HCT116 (cell line): ENCODE measurements at regions of chr19 and their contacts with region 1.

Region 1: DNA sequence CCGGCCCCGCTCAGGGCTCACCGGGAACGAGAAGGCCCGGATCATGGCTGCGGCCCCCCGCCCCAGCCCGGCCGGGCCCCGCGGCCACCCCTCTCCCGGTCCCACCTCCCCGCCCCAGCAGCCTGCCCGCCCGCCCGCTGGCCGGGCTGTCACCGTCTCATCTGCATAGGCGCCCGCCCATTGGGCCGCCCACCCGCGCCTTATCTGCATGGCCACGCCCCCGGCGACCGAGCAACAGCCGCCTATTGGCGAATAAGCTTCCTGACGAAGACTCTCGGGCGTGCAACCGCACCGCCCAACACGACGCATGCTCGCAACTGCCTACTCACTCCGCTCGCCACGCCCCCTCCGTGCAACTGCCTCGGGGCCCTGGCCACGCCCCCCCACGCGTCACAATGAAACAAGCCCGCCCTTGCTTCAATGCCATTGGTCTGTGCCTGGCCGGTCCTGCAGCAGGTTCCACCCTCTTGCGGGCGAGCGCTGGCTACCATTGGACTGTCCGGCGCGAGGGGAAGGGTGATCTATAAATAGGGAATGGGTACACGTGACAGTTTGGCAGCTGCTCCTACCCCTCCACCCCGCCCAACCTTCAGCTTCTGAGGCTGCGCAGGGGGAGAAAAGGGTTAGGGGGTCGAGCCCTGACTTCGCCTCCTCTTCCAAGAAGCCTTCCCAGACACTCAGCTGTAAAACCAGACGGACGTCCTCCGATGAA is at the start of gene DACT3:
- DNase-seq: peak; percentile 99
- ATAC-seq: peak; percentile 93
- H3K4me3 ChIP-seq: peak within 1 kb of the TSS; percentile 39 to 59
- H3K27ac ChIP-seq: no peak within 1 kb of the TSS; the same call in 1 of the 2 replicates
- H3K4me1 ChIP-seq: peaks cover 14 to 29% of the 10 kb centered on the region in 2 experiments
- H3K27me3 ChIP-seq: no peaks in the 10 kb centered on the region
- CTCF ChIP-seq: no peak
- POLR2A ChIP-seq: no peak
- RAD21 ChIP-seq: no peak
- total RNA-seq, gene DACT3: 2.0 TPM

Region 2: GRCh38 chr19:46351241-46352041 is 309.7 kb before region 1 on chr19:
- CTCF ChIA-PET with region 1: no interaction called
- POLR2A ChIA-PET with region 1: no interaction called
- RAD21 ChIA-PET with region 1: no interaction called
- intact Hi-C with region 1: no loop called
- DNase-seq: no peak
- ATAC-seq: no peak
- H3K4me3 ChIP-seq: no peak overlapping the region
- H3K27ac ChIP-seq: peak overlapping the region; percentile 25; the same call in 1 of the 2 replicates
- H3K4me1 ChIP-seq: peaks cover 0 to 38% of the 10 kb centered on the region in 2 experiments; a peak in 2 of 4 replicates
- H3K27me3 ChIP-seq: no peaks in the 10 kb centered on the region
- CTCF ChIP-seq: no peak
- POLR2A ChIP-seq: no peak
- RAD21 ChIP-seq: no peak

Region 3: DNA sequence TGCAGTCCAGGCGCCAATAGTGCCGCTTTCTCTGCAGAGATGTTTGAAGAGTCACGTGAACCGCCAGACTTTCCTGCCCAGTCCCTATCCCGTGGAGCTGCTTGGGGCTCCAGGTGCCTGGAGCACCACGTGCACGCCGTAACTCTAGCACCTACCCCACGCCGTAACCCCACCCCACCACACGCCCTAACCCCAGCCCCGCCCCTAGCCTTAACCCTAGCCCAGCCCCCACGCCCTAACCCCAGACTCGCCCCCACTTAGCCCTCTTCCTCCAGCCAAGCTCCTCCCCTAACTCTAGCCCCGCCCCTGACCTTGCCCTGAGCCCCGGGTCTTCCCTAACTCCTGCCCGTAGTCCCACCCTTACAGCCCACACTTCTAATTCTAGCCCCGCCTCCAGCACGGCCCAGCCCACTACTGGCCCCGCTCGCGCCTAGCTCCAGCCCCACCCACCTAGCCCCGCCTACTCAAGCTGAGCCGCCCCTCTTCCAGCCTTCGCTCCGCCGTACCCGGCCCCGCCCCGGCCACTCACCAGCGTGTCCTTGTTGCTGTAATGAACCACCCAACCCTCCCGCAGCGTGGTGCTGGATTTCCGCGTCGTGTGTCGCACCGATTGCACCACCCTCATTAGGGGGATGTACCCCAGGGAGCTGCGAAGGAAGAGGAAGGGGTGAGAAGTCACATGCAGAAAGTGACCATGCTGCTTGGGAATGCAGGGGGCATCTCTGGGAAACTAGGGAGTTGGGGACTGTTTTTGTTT is 36.2 kb after region 1 on chr19:
- CTCF ChIA-PET with region 1: interaction called, 9 read pairs
- POLR2A ChIA-PET with region 1: interaction called, 11 read pairs
- RAD21 ChIA-PET with region 1: no interaction called
- intact Hi-C with region 1: no loop called
- DNase-seq: peak; percentile 80
- ATAC-seq: peak; percentile 96
- H3K4me3 ChIP-seq: peak overlapping the region; percentile 11 to 37
- H3K27ac ChIP-seq: peak overlapping the region; percentile 73
- H3K4me1 ChIP-seq: peaks cover 10 to 33% of the 10 kb centered on the region in 2 experiments
- H3K27me3 ChIP-seq: no peaks in the 10 kb centered on the region
- CTCF ChIP-seq: no peak
- POLR2A ChIP-seq: no peak
- RAD21 ChIP-seq: no peak

Region 4: GRCh38 chr19:47081111-47081510 is 419.9 kb after region 1 on chr19:
- CTCF ChIA-PET with region 1: no interaction called
- POLR2A ChIA-PET with region 1: no interaction called
- RAD21 ChIA-PET with region 1: no interaction called
- intact Hi-C with region 1: no loop called
- DNase-seq: no peak
- ATAC-seq: no peak
- H3K4me3 ChIP-seq: no peak overlapping the region
- H3K27ac ChIP-seq: no peak overlapping the region
- H3K4me1 ChIP-seq: peaks cover 0 to 18% of the 10 kb centered on the region in 2 experiments; a peak in 3 of 4 replicates
- H3K27me3 ChIP-seq: no peaks in the 10 kb centered on the region
- CTCF ChIP-seq: no peak
- POLR2A ChIP-seq: no peak
- RAD21 ChIP-seq: no peak